Adrenal gland (tissue), 19 donors: ENCODE measurements at regions of chr10 and their contacts with region 1.

Region 1: GRCh38 chr10:72692057-72692910 is at the start of gene MCU:
- DNase-seq: peak; percentile 94 to 98 (median 96)
- H3K4me3 ChIP-seq: peak within 1 kb of the TSS; percentile 3 to 95 (median 69)
- H3K27ac ChIP-seq: peak within 1 kb of the TSS in 4 of 5 donors; percentile 61 to 96 (median 94)
- H3K4me1 ChIP-seq: peaks cover 0 to 27% of the 10 kb centered on the region in 2 donors
- H3K27me3 ChIP-seq: no peaks in the 10 kb centered on the region
- CTCF ChIP-seq: peak in 1 of 6 experiments; percentile 2
- POLR2A ChIP-seq: peak; percentile 60 to 88
- total RNA-seq, gene MCU: 6.4 to 22.2 (median 14.9) TPM

Region 2: DNA sequence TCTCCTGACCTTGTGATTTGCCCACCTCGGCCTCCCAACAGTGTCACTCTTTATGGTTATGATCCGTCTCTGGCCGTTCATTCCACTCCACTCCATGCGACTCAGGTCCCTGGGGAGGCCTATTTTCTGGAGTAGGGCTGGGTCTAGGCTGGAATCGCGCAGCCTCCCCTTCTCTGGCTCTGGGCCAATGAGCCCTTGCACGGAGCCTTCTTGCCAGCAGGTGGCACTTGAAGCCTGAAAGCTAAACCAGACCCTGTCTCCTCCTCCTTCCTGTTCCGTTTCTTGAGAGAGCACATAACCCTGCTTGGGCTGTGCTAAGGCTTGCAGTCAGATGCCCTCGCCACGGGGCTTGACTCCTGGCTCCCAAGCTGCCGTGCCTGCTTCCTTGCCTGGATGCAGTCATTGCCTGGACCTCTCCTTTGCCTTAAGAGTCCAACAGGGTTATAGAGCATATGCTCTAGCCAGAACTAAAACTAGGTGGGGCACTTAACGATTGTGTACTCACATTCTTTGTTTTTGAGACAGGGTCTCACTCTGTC is 328.0 kb before region 1 on chr10:
- intact Hi-C with region 1: loop called in 1 of 2 experiments (anchors 5 kb)
- DNase-seq: peak; percentile 86 to 97 (median 92)
- H3K4me3 ChIP-seq: no peak overlapping the region
- H3K27ac ChIP-seq: peak overlapping the region in 3 of 5 donors; percentile 27 to 38 (median 32)
- H3K4me1 ChIP-seq: peaks cover 3 to 11% of the 10 kb centered on the region in 2 donors
- H3K27me3 ChIP-seq: no peaks in the 10 kb centered on the region
- CTCF ChIP-seq: peak; percentile 85 to 98 (median 96)
- POLR2A ChIP-seq: no peak

Region 3: DNA sequence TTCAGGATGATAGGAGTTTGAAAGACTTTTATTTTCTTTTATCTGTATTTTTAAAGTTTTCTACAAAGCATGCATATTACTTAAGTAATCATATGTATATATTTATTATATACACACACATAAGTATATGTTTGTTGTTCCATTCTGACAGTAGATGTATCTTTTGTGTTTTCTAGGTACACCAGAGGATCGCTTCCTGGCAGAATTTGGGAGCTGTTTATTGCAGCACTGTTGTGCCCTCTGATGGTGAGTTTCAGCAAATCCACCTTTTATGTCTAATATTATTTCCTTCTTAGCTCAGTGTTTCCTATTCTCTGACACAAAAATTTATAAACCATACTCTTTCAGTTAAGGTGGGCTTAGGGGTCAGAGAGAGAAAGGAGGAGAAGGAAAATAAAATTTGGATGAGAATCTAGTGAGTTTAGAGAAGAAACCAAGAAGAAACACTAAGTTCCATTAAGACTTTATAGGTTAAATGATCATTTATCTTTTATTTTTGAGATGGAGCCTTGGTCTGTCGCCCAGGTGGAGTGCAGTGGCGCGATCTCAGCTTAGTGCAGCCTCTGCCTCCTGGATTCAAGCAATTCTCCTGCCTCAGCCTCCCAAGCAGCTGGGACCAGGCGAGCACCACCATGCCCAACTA is 142.0 kb after region 1 on chr10:
- intact Hi-C with region 1: loop called (anchors 5 to 10 kb)
- DNase-seq: peak; percentile 36 to 74 (median 55)
- H3K4me3 ChIP-seq: no peak overlapping the region
- H3K27ac ChIP-seq: no peak overlapping the region
- H3K4me1 ChIP-seq: no peaks in the 10 kb centered on the region
- H3K27me3 ChIP-seq: no peaks in the 10 kb centered on the region
- CTCF ChIP-seq: peak; percentile 46 to 86 (median 76)
- POLR2A ChIP-seq: no peak